Dorsolateral prefrontal cortex (tissue), 120 donors: ENCODE measurements at regions of chr9 and their contacts with region 1.

Region 1: GRCh38 chr9:109574068-109574882 is 76.2 kb upstream of the PTPN3 start:
- DNase-seq: peak in 3 of 10 donors; percentile 5 to 45 (median 10)
- H3K4me3 ChIP-seq: no peak overlapping the region
- H3K27ac ChIP-seq: peak overlapping the region in 1 of 59 donors; percentile 2
- H3K27me3 ChIP-seq: no peaks in the 10 kb centered on the region
- CTCF ChIP-seq: peak in 55 of 56 donors; percentile 60 to 92 (median 81)

Region 2: GRCh38 chr9:109499631-109500410 is 74.5 kb before region 1 on chr9:
- intact Hi-C with region 1: no loop called
- DNase-seq: peak in 3 of 10 donors; percentile 30 to 55 (median 52)
- H3K4me3 ChIP-seq: peak overlapping the region; percentile 6 to 62 (median 44)
- H3K27ac ChIP-seq: peak overlapping the region in 1 of 59 donors; percentile 12
- H3K27me3 ChIP-seq: peaks cover 0 to 48% (median 19%) of the 10 kb centered on the region in 45 donors
- CTCF ChIP-seq: no peak

Region 3: DNA sequence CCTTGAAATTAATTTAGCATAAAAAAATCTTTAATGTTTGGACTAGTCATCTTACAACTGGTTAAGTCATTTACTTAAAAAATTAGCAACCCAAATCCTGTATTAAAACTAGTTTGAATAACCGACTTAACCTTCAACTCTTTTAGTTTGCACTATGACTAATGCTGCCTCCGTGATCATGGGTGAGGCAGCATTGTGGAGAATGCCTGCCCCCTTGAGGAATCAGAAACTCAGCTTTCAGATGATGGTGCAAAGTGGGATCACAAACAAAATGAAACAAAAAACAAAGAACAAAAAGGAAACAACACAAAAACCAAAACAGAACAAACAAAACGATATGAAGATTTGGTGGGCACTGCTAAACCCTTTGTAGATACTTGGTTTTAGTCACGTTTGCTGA is 78.7 kb after region 1 on chr9:
- intact Hi-C with region 1: loop called in 1 of 2 experiments (anchors 2 kb)
- DNase-seq: peak in 2 of 10 donors; percentile 53 to 58
- H3K4me3 ChIP-seq: peak overlapping the region in 5 of 59 donors; percentile 9 to 24 (median 9)
- H3K27ac ChIP-seq: peak overlapping the region in 49 of 59 donors; percentile 14 to 86 (median 62)
- H3K27me3 ChIP-seq: no peaks in the 10 kb centered on the region
- CTCF ChIP-seq: peak in 55 of 56 donors; percentile 27 to 86 (median 63)

Region 4: DNA sequence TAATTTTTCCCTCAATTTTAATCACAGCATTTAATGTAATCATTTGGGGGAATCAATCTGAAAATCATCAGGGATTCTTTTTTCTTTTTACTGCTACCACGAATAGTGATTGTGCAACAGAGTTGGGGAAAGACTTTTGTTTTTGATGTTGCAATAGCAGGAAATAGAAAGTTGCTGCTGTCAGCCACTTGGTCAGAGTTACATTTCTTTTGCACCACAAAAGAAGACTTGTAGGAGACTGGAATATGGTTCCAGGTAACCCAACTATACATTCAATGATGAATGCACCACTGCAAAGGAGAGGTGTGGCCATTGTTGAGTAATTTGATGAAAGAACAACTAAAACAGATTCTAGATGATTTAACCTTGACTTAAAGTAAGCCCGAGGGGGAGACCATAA is 159.4 kb after region 1 on chr9:
- intact Hi-C with region 1: no loop called
- DNase-seq: no peak
- H3K4me3 ChIP-seq: no peak overlapping the region
- H3K27ac ChIP-seq: no peak overlapping the region
- H3K27me3 ChIP-seq: peaks cover 0 to 3% (median 0%) of the 10 kb centered on the region in 45 donors
- CTCF ChIP-seq: no peak

Region 5: GRCh38 chr9:109779711-109780452 is 205.6 kb after region 1 on chr9 and contains the start of gene PALM2AKAP2:
- intact Hi-C with region 1: loop called in 1 of 2 experiments (anchors 10 kb)
- DNase-seq: peak in 9 of 10 donors; percentile 23 to 81 (median 54)
- H3K4me3 ChIP-seq: peak within 1 kb of the TSS; percentile 44 to 80 (median 65)
- H3K27ac ChIP-seq: peak within 1 kb of the TSS in 24 of 59 donors; percentile 16 to 73 (median 52)
- H3K27me3 ChIP-seq: peaks cover 0 to 3% (median 0%) of the 10 kb centered on the region in 45 donors
- CTCF ChIP-seq: peak in 32 of 56 donors; percentile 9 to 66 (median 30)
- total RNA-seq, gene PALM2AKAP2: 8.5 to 32.5 (median 20.2) TPM

Region 6: DNA sequence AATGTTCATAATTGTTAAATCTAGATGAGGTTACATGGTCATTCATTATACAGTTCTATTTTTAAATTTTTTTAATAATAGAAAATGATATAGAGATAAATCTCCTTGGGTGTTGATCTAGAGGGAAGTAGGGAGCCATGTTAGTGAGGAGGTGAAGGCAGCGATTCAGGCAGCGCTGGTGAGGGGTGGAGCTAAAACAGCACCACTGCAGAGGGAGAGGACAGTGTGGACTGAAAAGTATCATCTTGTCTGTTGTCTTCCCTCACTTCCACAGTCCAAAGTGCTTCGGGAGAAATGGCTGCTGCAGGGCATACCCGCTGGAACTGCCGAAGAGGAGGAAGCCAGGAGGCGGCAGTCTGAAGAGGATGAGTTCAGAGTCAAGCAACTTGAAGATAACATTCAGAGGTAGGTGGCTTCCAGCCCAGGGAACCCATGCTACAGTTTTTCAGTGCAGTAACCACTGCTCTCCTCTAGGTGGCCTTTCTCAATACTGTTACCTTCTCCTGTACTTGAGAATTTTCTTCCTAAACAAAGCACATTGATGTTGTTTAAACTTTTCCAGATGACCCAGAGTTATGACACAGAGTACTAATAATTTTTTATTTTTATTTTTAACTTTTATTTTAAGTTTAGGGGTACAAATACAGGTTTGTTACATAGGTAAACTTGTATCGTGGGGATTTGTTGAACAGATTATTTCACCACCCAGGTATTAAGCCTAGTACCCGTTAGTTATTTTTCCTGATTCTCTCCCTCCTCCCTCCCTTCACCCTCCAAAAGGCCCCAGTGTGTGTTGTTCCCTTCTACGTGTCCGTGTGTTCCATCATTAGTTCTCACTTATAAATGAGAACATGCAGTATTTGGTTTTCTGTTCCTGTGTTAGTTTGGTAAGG is 306.2 kb after region 1 on chr9:
- intact Hi-C with region 1: loop called in 1 of 2 experiments (anchors 10 kb)
- DNase-seq: no peak
- H3K4me3 ChIP-seq: no peak overlapping the region
- H3K27ac ChIP-seq: peak overlapping the region in 11 of 59 donors; percentile 1 to 50 (median 28)
- H3K27me3 ChIP-seq: no peaks in the 10 kb centered on the region
- CTCF ChIP-seq: peak in 55 of 56 donors; percentile 27 to 66 (median 51)